WTC11 (cell line): ENCODE measurements at regions of chr1 and their contacts with region 1.

Region 1: DNA sequence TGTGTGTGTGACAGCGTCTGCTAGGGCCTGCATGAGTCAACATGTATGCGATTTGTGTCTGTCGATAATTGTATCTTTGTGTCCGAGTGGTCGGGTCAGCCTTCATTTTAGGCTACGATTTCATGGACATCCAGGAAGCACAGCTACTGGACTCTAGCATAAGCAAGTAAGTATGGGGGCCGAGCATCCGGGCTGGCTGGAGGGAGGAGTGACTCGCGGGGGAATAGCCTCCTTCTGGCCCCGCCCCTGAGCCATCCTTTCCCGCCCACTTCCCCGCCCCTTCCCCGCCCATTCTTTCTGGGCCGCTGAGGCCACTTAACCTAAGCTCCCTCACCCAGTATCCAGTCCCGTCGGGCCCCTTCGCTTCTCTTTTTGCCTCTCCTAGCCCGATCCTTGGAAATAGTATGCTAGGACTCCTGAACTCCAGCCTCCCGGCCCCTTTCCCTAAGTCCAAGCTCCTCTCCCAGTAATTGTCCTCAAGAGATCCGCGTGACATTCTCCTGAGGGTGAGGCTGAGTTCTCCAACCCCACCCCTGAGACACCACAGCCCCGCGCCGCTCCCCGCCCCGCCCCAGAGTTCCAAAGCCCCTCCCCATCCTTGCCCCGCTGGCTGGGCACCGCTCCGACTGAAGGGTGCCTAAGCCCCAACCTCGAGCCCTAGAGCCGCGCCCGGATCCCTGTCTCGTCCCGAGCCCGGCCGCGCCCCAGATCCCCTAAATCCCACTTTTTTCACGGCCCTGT is 1.2 kb downstream of the MAP3K6 start:
- DNase-seq: peak; percentile 86
- ATAC-seq: peak; percentile 53
- H3K4me3 Mint-ChIP-seq: peak overlapping the region; percentile 84
- H3K27ac Mint-ChIP-seq: peak overlapping the region; percentile 97
- H3K4me1 Mint-ChIP-seq: peaks cover 25% of the 10 kb centered on the region
- H3K27me3 Mint-ChIP-seq: peaks cover 33% of the 10 kb centered on the region
- CTCF ChIP-seq: no peak

Region 2: GRCh38 chr1:27341525-27342252 is 23.9 kb before region 1 on chr1 and contains the start of gene SYTL1:
- CTCF ChIA-PET with region 1: interaction called, 13 read pairs
- POLR2A ChIA-PET with region 1: interaction called, 5 read pairs
- DNase-seq: peak; percentile 72
- ATAC-seq: peak; percentile 80
- H3K4me3 Mint-ChIP-seq: peak within 1 kb of the TSS; percentile 67
- H3K27ac Mint-ChIP-seq: peak within 1 kb of the TSS; percentile 38
- H3K4me1 Mint-ChIP-seq: peaks cover 39% of the 10 kb centered on the region
- H3K27me3 Mint-ChIP-seq: peaks cover 2% of the 10 kb centered on the region; the same call in 1 of the 2 replicates
- CTCF ChIP-seq: no peak
- total RNA-seq, gene SYTL1: 18.0 to 19.7 TPM (median 18.5 TPM) in 3 replicates

Region 3: DNA sequence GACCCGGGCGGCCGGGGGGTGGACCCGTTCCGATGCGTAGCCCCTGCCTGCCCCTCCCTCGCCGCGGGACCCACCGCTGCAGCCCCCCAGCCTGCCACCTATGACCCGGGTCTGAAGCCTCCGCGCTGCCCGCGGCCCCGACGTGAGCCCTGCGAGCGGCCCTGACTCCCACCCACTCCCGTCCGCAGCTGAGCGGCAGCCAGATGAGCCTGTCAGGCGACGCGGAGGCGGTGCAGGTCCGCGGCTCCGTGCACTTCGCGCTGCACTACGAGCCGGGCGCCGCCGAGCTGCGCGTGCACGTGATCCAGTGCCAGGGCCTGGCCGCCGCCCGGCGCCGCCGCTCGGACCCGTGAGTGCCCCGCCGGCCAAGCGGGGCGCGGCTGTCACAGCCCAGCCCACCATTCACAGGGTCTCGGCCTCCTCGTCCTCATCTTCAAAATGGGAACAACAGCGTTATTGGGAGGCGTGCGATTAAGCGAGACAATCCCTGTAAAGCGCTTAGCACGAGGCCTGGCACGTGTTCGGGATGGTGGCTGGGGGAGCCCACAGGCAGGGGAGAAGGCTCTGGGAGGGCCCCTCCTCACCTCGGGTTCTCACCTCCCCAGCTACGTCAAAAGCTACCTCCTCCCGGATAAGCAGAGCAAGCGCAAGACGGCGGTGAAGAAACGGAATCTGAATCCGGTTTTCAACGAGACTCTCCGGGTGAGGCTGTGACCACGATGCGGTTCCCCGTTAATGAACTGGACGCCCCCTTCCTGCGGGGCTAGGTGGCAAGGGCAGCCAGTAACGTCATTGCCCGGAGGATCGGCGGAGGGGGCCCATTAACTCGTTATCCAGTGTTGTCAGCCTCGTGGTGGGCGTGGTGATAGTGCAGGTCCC is 15.5 kb before region 1 on chr1:
- CTCF ChIA-PET with region 1: interaction called, 258 read pairs
- POLR2A ChIA-PET with region 1: interaction called, 29 read pairs
- DNase-seq: peak; percentile 80
- ATAC-seq: peak; percentile 41
- H3K4me3 Mint-ChIP-seq: peak overlapping the region; percentile 75
- H3K27ac Mint-ChIP-seq: no peak overlapping the region
- H3K4me1 Mint-ChIP-seq: peaks cover 18% of the 10 kb centered on the region
- H3K27me3 Mint-ChIP-seq: peaks cover 12% of the 10 kb centered on the region
- CTCF ChIP-seq: no peak

Region 4: DNA sequence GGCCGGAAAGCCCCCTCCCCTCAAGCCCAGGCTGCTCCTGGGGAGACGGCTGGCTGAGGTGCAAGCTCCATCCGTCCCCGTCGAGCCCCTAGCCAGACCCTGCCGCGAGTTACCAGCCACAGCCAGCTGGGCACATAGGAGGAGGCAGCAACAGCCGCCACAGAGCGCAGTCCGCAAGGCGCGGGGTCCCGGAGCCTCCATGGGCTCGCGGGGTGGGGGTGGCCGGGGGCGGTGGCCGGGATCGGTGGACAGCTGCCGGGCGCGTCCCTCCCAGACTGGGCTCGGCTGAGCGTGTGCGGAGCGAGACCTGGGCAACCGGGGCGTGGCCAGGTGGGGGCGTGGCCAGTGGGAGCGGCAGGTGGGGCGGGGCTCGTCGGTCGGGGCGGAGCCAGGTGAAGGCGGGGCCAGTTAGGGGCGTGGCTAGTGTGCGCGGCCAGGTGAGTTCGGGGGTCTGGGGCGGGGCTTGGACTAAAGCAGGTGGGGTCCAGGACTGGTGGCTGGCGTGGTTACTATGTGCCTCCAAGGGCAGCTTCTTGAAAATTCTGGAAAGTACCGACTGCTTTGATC is 17.6 kb after region 1 on chr1 and contains the start of gene CD164L2:
- CTCF ChIA-PET with region 1: interaction called, 27 read pairs
- POLR2A ChIA-PET with region 1: interaction called, 13 read pairs
- DNase-seq: peak; percentile 93
- ATAC-seq: peak; percentile 95
- H3K4me3 Mint-ChIP-seq: peak within 1 kb of the TSS; percentile 67
- H3K27ac Mint-ChIP-seq: no peak within 1 kb of the TSS
- H3K4me1 Mint-ChIP-seq: peaks cover 4% of the 10 kb centered on the region; the same call in 1 of the 2 replicates
- H3K27me3 Mint-ChIP-seq: peaks cover 31% of the 10 kb centered on the region
- CTCF ChIP-seq: no peak
- total RNA-seq, gene CD164L2: 3.0 to 5.5 TPM (median 4.3 TPM) in 3 replicates

Region 5: GRCh38 chr1:27469334-27469733 is 103.8 kb after region 1 on chr1:
- CTCF ChIA-PET with region 1: no interaction called
- POLR2A ChIA-PET with region 1: no interaction called
- DNase-seq: no peak
- ATAC-seq: no peak
- H3K4me3 Mint-ChIP-seq: no peak overlapping the region
- H3K27ac Mint-ChIP-seq: no peak overlapping the region
- H3K4me1 Mint-ChIP-seq: peaks cover 37% of the 10 kb centered on the region
- H3K27me3 Mint-ChIP-seq: no peaks in the 10 kb centered on the region
- CTCF ChIP-seq: no peak